A673 (cell line): ENCODE measurements at regions of chr1 and their contacts with region 1.

Region 1: DNA sequence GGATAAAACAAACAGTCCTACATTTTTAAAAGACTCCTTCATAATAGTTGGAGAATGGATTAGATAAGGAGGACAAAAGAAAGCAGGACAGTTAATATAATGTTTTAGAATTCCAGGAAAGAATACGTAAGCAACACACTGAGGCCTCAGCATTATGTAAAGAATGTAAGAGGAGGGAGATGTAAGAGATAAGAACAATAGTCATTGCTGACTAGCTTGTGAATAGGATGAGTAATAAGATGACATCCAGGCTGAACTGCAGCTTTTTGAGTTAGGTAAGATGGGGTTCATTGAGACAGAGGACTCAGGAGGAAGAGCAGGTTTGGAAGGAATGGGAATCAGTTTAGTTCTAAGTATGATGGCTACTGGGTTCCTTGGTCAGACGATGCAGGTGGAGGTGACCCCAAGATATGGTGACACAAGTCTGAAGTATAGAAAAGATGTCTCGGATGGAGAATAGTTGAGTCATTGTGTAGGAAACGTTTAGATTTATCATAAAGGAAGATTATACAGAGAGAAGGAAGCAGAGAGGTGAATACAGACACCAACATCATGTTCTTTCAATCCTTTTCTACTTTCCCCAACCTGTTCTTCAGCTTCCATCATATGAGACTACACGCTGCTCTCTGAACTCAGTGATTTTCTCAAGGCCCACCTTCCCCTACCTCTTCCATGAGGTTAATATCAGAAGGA is 372.8 kb downstream of the PTBP2 start:
- DNase-seq: peak; percentile 40
- H3K4me3 ChIP-seq: no peak overlapping the region
- H3K27ac ChIP-seq: no peak overlapping the region
- H3K4me1 ChIP-seq: no peaks in the 10 kb centered on the region
- H3K27me3 ChIP-seq: no peaks in the 10 kb centered on the region
- CTCF ChIP-seq: no peak

Region 2: GRCh38 chr1:97063530-97063929 is 30.9 kb before region 1 on chr1:
- CTCF ChIA-PET with region 1: no interaction called
- POLR2A ChIA-PET with region 1: no interaction called
- intact Hi-C with region 1: no loop called
- DNase-seq: no peak
- H3K4me3 ChIP-seq: no peak overlapping the region
- H3K27ac ChIP-seq: no peak overlapping the region
- H3K4me1 ChIP-seq: no peaks in the 10 kb centered on the region
- H3K27me3 ChIP-seq: no peaks in the 10 kb centered on the region
- CTCF ChIP-seq: no peak

Region 3: GRCh38 chr1:97082160-97082848 is 12.1 kb before region 1 on chr1:
- CTCF ChIA-PET with region 1: no interaction called
- POLR2A ChIA-PET with region 1: interaction called, 11 read pairs
- intact Hi-C with region 1: no loop called
- DNase-seq: no peak
- H3K4me3 ChIP-seq: no peak overlapping the region
- H3K27ac ChIP-seq: no peak overlapping the region
- H3K4me1 ChIP-seq: peaks cover 5% of the 10 kb centered on the region
- H3K27me3 ChIP-seq: no peaks in the 10 kb centered on the region
- CTCF ChIP-seq: no peak